WTC11 (cell line): ENCODE measurements at regions of chr9 and their contacts with region 1.

Region 1: DNA sequence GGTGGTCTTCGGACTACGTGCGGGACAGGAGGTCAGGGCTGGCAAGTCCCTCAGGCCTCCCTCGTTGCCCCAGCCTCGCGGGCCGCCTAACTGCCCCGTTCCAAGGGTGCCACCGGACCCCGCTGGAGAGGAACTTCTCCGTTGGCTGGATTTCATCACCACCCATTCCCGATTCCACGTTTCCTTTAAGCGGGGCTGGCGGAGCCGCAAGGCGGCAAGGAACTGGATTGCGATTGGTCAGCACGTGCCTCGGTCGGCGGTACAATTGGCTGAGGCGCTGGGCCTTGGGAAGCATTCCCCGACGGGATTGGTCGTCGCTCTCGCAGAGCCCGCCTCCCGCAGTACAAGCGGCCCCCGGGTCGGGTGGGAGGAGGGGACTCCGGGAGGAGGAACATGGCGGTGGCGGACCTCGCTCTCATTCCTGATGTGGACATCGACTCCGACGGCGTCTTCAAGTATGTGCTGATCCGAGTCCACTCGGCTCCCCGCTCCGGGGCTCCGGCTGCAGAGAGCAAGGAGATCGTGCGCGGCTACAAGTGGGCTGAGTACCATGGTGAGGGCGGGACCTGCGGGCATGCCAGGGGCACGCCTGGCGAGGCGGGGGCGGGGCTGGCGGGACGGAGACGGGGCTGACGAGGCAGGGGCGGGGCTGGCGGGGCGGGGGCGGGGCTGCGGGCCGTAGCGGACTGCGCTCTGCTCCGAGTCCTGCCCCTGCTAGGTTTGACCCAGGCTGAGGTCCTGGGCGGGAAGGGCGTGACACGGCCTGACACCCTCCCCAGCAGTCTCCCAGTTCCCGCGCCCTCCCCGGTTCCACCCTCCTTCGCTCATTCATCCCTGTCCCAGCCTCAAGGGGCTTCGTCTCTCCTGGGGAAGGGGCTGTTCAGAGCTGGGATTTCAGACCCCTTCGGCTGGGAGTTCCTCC is at the start of gene PHPT1:
- DNase-seq: peak; percentile 99
- ATAC-seq: peak; percentile 75
- H3K4me3 Mint-ChIP-seq: peak within 1 kb of the TSS; percentile 94
- H3K27ac Mint-ChIP-seq: peak within 1 kb of the TSS; percentile 94
- H3K4me1 Mint-ChIP-seq: peaks cover 4% of the 10 kb centered on the region
- H3K27me3 Mint-ChIP-seq: peaks cover 3% of the 10 kb centered on the region
- CTCF ChIP-seq: no peak
- total RNA-seq, gene PHPT1: 138 to 176 TPM (median 173 TPM) in 3 replicates

Region 2: GRCh38 chr9:136790927-136791641 is 58.2 kb before region 1 on chr9 and contains the start of gene TMEM141:
- CTCF ChIA-PET with region 1: interaction called, 13 read pairs
- POLR2A ChIA-PET with region 1: no interaction called
- DNase-seq: peak; percentile 100
- ATAC-seq: peak; percentile 92
- H3K4me3 Mint-ChIP-seq: peak within 1 kb of the TSS; percentile 78
- H3K27ac Mint-ChIP-seq: peak within 1 kb of the TSS; percentile 88
- H3K4me1 Mint-ChIP-seq: peaks cover 20% of the 10 kb centered on the region
- H3K27me3 Mint-ChIP-seq: peaks cover 5% of the 10 kb centered on the region
- CTCF ChIP-seq: no peak
- total RNA-seq, gene TMEM141: 72.0 to 86.7 TPM (median 86.1 TPM) in 3 replicates

Region 3: DNA sequence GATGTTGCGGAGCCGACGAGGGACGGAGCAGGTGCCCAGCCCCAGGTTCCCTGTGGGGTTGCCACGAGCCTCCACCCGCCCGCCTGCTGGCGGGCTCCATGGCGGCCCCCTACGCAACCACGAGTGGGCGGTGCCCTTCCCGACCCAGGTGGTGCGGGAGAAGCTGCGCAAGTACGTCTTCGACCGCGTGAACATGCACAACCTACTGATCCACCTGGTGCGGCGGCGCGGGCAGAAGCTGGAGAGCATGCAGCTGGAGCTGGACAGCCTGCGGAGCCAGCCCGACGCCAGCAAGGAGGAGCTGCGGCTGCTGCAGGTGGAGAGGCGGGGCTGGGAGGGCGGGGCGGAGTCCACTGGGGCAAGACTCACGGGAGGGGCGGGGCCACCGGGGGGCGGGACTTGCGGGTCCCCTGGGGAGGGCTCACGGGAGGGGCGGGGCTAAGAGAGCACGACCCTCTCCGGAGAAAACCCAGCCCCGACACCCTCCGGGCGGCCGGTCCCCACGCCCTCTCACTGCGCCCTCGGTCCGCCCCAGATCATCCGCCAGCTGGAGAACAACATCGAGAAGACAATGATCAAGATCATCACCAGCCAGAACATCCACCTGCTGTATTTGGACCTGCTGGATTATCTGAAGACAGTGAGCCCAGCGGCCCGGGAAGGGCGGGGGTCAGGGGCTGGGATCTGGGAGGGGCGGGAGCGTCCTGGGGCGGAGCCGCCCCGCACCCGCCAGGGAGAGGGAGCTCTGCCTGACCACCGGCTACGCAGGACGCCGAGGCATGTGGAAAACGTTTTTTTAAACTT is 49.2 kb before region 1 on chr9:
- CTCF ChIA-PET with region 1: interaction called, 13 read pairs
- POLR2A ChIA-PET with region 1: interaction called, 14 read pairs
- DNase-seq: peak; percentile 92
- ATAC-seq: peak; percentile 54
- H3K4me3 Mint-ChIP-seq: peak overlapping the region; percentile 90
- H3K27ac Mint-ChIP-seq: peak overlapping the region; percentile 97
- H3K4me1 Mint-ChIP-seq: peaks cover 17% of the 10 kb centered on the region
- H3K27me3 Mint-ChIP-seq: peaks cover 58% of the 10 kb centered on the region
- CTCF ChIP-seq: no peak

Region 4: GRCh38 chr9:136807281-136808074 is 41.8 kb before region 1 on chr9 and contains the start of gene RABL6:
- CTCF ChIA-PET with region 1: interaction called, 32 read pairs
- POLR2A ChIA-PET with region 1: interaction called, 3 read pairs
- DNase-seq: peak; percentile 65
- ATAC-seq: peak; percentile 74
- H3K4me3 Mint-ChIP-seq: peak within 1 kb of the TSS; percentile 86
- H3K27ac Mint-ChIP-seq: peak within 1 kb of the TSS; percentile 53; the same call in 1 of the 2 replicates
- H3K4me1 Mint-ChIP-seq: peaks cover 21% of the 10 kb centered on the region
- H3K27me3 Mint-ChIP-seq: peaks cover 20% of the 10 kb centered on the region
- CTCF ChIP-seq: no peak
- total RNA-seq, gene RABL6: 134 to 171 TPM (median 139 TPM) in 3 replicates

Region 5: DNA sequence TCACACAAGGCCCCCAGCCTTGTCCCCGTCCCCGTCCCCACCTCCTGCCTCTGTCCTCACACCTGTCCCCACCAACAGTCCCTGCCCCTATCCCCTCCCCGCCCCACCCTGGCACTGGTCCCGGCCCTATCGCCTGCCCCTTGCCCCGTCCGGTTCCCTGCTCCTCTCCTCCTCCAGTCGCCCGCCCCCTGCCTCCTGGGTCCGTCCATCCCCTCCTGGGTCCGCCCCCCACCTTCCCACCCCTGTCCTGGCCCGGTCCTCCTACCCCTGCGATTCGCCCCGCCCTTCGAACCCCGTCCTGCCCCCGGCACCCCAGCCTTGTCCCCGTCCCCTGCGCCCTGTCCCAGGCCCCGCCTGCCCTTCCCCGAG is 16.4 kb after region 1 on chr9:
- CTCF ChIA-PET with region 1: no interaction called
- POLR2A ChIA-PET with region 1: interaction called, 14 read pairs
- DNase-seq: no peak
- ATAC-seq: peak; percentile 30
- H3K4me3 Mint-ChIP-seq: peak overlapping the region; percentile 71
- H3K27ac Mint-ChIP-seq: no peak overlapping the region
- H3K4me1 Mint-ChIP-seq: peaks cover 4% of the 10 kb centered on the region
- H3K27me3 Mint-ChIP-seq: peaks cover 11% of the 10 kb centered on the region
- CTCF ChIP-seq: no peak

Region 6: GRCh38 chr9:136885950-136886578 is 36.8 kb after region 1 on chr9 and contains the start of gene TRAF2:
- CTCF ChIA-PET with region 1: interaction called, 14 read pairs
- POLR2A ChIA-PET with region 1: interaction called, 4 read pairs
- DNase-seq: peak; percentile 98
- ATAC-seq: peak; percentile 97
- H3K4me3 Mint-ChIP-seq: peak within 1 kb of the TSS; percentile 76
- H3K27ac Mint-ChIP-seq: peak within 1 kb of the TSS; percentile 60; the same call in 1 of the 2 replicates
- H3K4me1 Mint-ChIP-seq: peaks cover 9% of the 10 kb centered on the region
- H3K27me3 Mint-ChIP-seq: no peaks in the 10 kb centered on the region
- CTCF ChIP-seq: no peak
- total RNA-seq, gene TRAF2: 55.0 to 62.5 TPM (median 61.3 TPM) in 3 replicates